PC-9 (cell line): ENCODE measurements at regions of chr2 and their contacts with region 1.

Region 1: GRCh38 chr2:147792966-147793623 is 51.7 kb upstream of the ACVR2A start:
- DNase-seq: no peak
- H3K4me3 ChIP-seq: no peak overlapping the region
- H3K27ac ChIP-seq: no peak overlapping the region
- H3K4me1 ChIP-seq: no peaks in the 10 kb centered on the region
- H3K27me3 ChIP-seq: no peaks in the 10 kb centered on the region
- CTCF ChIP-seq: no peak

Region 2: GRCh38 chr2:147873859-147874483 is 80.9 kb after region 1 on chr2:
- CTCF ChIA-PET with region 1: no interaction called
- POLR2A ChIA-PET with region 1: interaction called, 13 read pairs
- intact Hi-C with region 1: no loop called
- DNase-seq: no peak
- H3K4me3 ChIP-seq: no peak overlapping the region
- H3K27ac ChIP-seq: no peak overlapping the region
- H3K4me1 ChIP-seq: no peaks in the 10 kb centered on the region
- H3K27me3 ChIP-seq: no peaks in the 10 kb centered on the region
- CTCF ChIP-seq: no peak

Region 3: GRCh38 chr2:148130581-148130980 is 337.5 kb after region 1 on chr2:
- CTCF ChIA-PET with region 1: no interaction called
- POLR2A ChIA-PET with region 1: no interaction called
- intact Hi-C with region 1: no loop called
- DNase-seq: no peak
- H3K4me3 ChIP-seq: no peak overlapping the region
- H3K27ac ChIP-seq: no peak overlapping the region
- H3K4me1 ChIP-seq: no peaks in the 10 kb centered on the region
- H3K27me3 ChIP-seq: no peaks in the 10 kb centered on the region
- CTCF ChIP-seq: no peak